Spleen (tissue), 13 donors: ENCODE measurements at regions of chr5 and their contacts with region 1.

Region 1: GRCh38 chr5:140588311-140589070 is 23.9 kb downstream of the SLC35A4 start:
- DNase-seq: no peak
- H3K4me3 ChIP-seq: no peak overlapping the region
- H3K27ac ChIP-seq: peak overlapping the region; percentile 40 to 89 (median 73)
- H3K4me1 ChIP-seq: peaks cover 7 to 54% (median 26%) of the 10 kb centered on the region in 6 donors
- H3K27me3 ChIP-seq: no peaks in the 10 kb centered on the region
- CTCF ChIP-seq: no peak
- POLR2A ChIP-seq: no peak

Region 2: GRCh38 chr5:140628711-140629110 is 40.2 kb after region 1 on chr5:
- intact Hi-C with region 1: loop called (anchors 5 kb)
- DNase-seq: no peak
- H3K4me3 ChIP-seq: no peak overlapping the region
- H3K27ac ChIP-seq: no peak overlapping the region
- H3K4me1 ChIP-seq: peaks cover 0 to 40% (median 19%) of the 10 kb centered on the region in 6 donors
- H3K27me3 ChIP-seq: peaks cover 0 to 9% (median 0%) of the 10 kb centered on the region in 7 donors
- CTCF ChIP-seq: no peak
- POLR2A ChIP-seq: no peak

Region 3: DNA sequence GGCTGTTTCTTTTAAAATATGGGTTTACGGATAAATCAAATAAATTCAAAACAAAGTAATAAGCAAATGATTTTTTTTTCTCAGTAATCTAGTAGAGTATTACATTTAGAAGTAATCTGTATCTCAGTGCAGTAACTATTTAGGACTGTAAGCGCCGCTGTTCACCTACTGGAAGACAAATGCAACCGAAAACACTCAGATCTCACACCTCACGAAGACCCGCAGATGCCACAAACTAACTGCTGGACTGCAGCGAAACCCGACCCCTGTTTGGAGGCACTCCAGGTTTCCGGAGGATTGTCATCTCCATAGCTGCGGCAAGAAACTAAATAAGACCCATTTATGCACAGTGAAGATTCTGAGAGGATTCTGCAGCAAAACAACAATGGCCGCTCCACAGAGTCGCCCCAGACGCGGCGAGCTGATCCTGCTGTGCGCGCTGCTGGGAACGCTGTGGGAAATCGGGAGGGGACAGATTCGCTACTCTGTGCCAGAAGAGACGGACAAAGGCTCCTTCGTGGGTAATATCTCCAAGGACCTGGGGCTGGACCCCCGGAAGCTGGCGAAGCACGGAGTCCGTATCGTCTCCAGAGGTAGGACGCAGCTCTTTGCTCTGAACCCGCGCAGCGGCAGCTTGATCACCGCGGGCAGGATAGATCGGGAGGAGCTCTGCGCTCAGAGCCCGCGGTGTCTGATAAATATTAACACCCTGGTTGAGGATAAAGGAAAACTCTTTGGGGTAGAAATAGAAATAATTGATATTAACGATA is 804.1 kb after region 1 on chr5 and contains the start of gene PCDHGA8:
- intact Hi-C with region 1: no loop called
- DNase-seq: no peak
- H3K4me3 ChIP-seq: peak within 1 kb of the TSS in 1 of 8 donors; percentile 6
- H3K27ac ChIP-seq: no peak within 1 kb of the TSS
- H3K4me1 ChIP-seq: no peaks in the 10 kb centered on the region
- H3K27me3 ChIP-seq: peaks cover 0 to 96% (median 11%) of the 10 kb centered on the region in 7 donors
- CTCF ChIP-seq: no peak
- POLR2A ChIP-seq: no peak
- total RNA-seq, gene PCDHGA8: 0.70 to 3.9 (median 2.1) TPM